ENCODE measurements at regions of chr22 and their contacts with region 1.

Region 1: GRCh38 chr22:35231585-35232084 is 25.7 kb upstream of the HMGXB4 start:
- DNase-seq: peak; percentile 85
- H3K4me3 Mint-ChIP-seq: no peak overlapping the region
- H3K27ac Mint-ChIP-seq: no peak overlapping the region
- H3K4me1 Mint-ChIP-seq: peaks cover 2% of the 10 kb centered on the region
- H3K27me3 Mint-ChIP-seq: peaks cover 3% of the 10 kb centered on the region

Region 2: DNA sequence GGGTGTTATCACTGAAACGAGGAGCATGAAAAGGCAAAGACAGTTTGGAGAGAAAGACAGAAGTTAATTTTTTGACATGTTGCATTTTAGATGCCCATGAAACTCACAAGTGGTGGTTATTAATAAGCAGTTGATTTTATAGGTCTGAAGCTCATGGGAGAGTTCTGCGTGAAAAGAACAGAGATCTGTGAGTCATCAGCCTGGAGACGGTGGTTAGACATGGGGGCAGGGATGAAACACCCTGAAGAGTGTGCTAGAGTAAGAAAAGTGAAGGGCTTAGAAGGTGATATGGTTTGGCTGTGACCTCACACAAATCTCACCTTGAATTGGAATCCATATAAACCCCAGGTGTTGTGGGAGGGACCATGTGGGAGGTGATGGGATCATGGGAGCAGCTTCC is 454.8 kb before region 1 on chr22:
- CTCF ChIA-PET with region 1: no interaction called
- intact Hi-C with region 1: no loop called
- DNase-seq: no peak
- H3K4me3 Mint-ChIP-seq: no peak overlapping the region
- H3K27ac Mint-ChIP-seq: no peak overlapping the region
- H3K4me1 Mint-ChIP-seq: no peaks in the 10 kb centered on the region
- H3K27me3 Mint-ChIP-seq: peaks cover 4% of the 10 kb centered on the region

Region 3: DNA sequence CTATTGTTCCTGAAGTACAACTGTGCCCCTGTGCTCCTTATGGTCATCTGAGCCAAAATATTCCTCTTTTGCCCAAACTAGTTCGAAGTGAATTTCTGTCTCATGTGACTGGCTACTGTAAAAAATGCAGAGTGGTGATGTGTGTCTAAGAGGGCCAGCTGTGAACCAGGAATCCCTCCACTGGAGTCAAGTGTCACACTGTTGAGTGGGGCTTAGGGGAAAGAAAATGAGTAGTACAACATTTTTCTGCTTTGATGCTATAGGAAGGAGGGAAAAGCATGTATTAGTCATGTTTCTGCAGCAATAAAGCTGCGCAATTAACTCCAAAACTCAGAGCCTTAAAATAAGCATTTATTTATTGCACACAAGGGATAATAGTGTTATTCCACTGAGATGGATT is 14.1 kb before region 1 on chr22:
- CTCF ChIA-PET with region 1: interaction called, 11 read pairs
- intact Hi-C with region 1: no loop called
- DNase-seq: no peak
- H3K4me3 Mint-ChIP-seq: no peak overlapping the region
- H3K27ac Mint-ChIP-seq: no peak overlapping the region
- H3K4me1 Mint-ChIP-seq: no peaks in the 10 kb centered on the region
- H3K27me3 Mint-ChIP-seq: peaks cover 2% of the 10 kb centered on the region

Region 4: DNA sequence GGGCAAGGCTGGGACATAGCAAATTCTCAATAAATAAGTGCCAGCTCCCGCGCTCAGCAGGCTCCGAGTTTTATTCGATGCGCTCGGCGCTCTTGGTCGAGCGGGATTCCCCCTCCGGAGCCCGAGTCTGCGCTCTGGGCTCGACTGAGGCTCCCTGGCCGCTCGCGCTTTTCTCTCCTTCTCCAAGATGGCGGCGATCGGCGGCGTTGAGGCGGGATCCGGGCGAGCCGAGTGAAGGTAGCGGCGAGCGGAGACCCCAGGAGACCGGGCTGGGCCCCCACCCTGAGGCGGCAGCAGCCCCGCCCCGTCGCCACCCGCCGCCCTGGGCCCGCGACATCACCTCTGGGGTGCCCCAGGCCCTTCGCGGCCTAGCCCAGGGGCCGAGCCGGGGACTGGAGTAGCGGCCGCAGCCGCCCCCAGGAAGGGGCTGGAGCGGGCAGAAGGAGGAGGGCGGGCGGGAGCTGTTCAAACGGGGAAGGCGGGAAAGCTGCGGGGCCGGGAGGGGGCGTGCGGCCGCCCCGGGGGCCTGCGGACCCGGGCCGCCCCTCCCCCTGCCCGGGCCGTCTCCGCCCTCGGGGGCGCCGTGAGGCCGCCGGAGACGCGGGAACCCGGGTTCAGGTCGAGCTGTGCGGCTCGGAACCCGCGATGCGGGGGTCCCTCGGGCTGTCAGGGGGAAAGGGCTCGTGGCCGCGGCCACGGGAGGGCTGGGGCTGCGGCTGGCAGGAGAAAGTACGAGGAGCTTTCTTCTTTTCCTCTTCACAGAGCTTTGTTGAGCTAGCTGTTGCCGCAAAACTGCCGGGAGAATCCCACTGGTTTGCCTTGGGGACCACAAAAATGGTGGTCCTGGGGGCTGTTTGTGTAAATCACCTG is 25.9 kb after region 1 on chr22 and contains the start of gene HMGXB4:
- CTCF ChIA-PET with region 1: interaction called, 10 read pairs
- intact Hi-C with region 1: no loop called
- DNase-seq: peak; percentile 91
- H3K4me3 Mint-ChIP-seq: peak within 1 kb of the TSS; percentile 88
- H3K27ac Mint-ChIP-seq: peak within 1 kb of the TSS; percentile 92
- H3K4me1 Mint-ChIP-seq: peaks cover 27% of the 10 kb centered on the region
- H3K27me3 Mint-ChIP-seq: no peaks in the 10 kb centered on the region
- total RNA-seq, gene HMGXB4: 36.6 to 38.2 TPM

Region 5: GRCh38 chr22:35313311-35314121 is 81.9 kb after region 1 on chr22:
- CTCF ChIA-PET with region 1: no interaction called
- intact Hi-C with region 1: no loop called
- DNase-seq: peak; percentile 51
- H3K4me3 Mint-ChIP-seq: no peak overlapping the region
- H3K27ac Mint-ChIP-seq: no peak overlapping the region
- H3K4me1 Mint-ChIP-seq: peaks cover 54% of the 10 kb centered on the region
- H3K27me3 Mint-ChIP-seq: no peaks in the 10 kb centered on the region

Measured in activated naive CD4-positive, alpha-beta T cell treated with anti-CD3 and anti-CD28 coated beads for 36 hours (primary cell).